A549 (cell line): ENCODE measurements at regions of chr6 and their contacts with region 1.

Region 1: GRCh38 chr6:35240840-35241801 is 18.4 kb upstream of the ZNF76 start:
- DNase-seq: peak; percentile 48 to 80
- ATAC-seq: peak; percentile 91 to 92
- H3K4me3 ChIP-seq: no peak overlapping the region
- H3K27ac ChIP-seq: no peak overlapping the region
- H3K4me1 ChIP-seq: no peaks in the 10 kb centered on the region
- CTCF ChIP-seq: peak; percentile 80
- EP300 ChIP-seq: no peak
- POLR2A ChIP-seq: no peak
- RAD21 ChIP-seq: peak; percentile 83 to 84

Region 2: DNA sequence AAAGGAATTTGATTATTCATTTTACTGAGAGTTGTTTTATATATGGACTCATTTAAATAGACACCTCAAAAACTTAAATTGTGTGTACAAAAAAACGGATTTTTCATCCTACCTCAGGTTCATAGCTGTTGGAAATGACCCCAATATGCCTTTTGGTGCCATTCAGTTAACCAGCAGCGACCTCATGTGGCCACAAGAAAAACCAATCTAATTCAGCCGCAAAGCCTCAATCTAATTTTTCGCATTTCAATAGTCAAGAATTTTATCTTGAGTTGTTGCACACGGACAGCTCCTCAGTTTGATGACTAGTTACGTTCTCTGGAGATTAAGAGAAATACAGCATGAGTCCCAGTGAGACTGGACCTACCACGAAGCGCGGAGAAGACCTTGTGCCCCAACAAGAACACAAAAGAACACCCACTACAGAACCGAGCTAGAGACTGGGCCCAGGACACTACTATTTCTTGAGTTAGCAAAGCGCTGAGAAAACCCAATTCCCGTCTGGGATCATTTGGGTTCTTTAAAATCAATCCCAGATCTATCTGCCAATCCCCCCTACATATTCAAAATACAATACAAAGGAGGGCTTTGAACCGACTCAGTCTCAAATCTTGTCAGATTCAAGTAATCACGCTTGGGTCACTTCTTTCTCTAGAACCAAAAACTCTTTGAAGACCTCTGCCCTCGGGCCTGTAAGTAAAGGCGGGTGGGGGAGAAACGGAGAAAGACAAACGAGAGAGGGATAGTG is 101.0 kb before region 1 on chr6:
- CTCF ChIA-PET with region 1: interaction called, 107 read pairs
- POLR2A ChIA-PET with region 1: no interaction called
- DNase-seq: peak; percentile 18 to 67
- ATAC-seq: peak; percentile 24 to 60; a peak in 2 of 6 replicates
- H3K4me3 ChIP-seq: no peak overlapping the region
- H3K27ac ChIP-seq: no peak overlapping the region
- H3K4me1 ChIP-seq: peaks cover 4% of the 10 kb centered on the region; the same call in 2 of the 3 replicates
- CTCF ChIP-seq: peak; percentile 83
- EP300 ChIP-seq: no peak
- POLR2A ChIP-seq: no peak
- RAD21 ChIP-seq: peak; percentile 93

Region 3: DNA sequence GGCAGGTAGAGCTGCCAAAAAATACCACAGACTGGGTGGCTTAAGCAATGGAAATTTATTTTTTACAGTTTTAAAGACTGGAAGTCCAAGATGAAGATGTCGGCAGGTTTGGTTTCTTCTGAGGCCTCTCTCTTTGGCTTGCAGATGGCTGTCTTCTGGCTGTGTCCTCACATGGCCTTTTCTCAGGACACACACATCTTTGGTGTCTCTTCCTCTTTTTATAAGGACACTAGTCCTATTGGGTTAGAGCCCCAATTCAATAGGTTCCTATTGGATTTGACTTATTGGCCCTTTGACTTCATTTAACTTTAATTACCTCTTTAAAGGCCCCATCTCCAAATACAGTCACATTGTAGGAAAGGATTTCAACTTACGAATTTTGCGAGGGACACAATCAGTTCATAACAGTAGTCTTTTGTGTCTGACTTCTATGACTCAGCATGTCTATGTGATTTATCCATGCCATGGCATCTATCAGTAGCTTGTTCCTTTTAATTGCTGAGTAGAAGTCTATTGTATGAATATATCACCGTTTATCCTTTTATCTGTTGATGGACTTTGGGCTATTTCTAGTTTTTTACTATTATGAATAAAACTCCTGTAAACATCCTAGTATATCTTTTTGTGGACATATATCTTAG is 88.9 kb before region 1 on chr6:
- CTCF ChIA-PET with region 1: interaction called, 107 read pairs
- POLR2A ChIA-PET with region 1: no interaction called
- DNase-seq: peak in 1 of 2 experiments; percentile 13
- ATAC-seq: no peak
- H3K4me3 ChIP-seq: no peak overlapping the region
- H3K27ac ChIP-seq: no peak overlapping the region
- H3K4me1 ChIP-seq: peaks cover 15% of the 10 kb centered on the region; the same call in 2 of the 3 replicates
- CTCF ChIP-seq: no peak
- EP300 ChIP-seq: no peak
- POLR2A ChIP-seq: no peak
- RAD21 ChIP-seq: no peak

Region 4: DNA sequence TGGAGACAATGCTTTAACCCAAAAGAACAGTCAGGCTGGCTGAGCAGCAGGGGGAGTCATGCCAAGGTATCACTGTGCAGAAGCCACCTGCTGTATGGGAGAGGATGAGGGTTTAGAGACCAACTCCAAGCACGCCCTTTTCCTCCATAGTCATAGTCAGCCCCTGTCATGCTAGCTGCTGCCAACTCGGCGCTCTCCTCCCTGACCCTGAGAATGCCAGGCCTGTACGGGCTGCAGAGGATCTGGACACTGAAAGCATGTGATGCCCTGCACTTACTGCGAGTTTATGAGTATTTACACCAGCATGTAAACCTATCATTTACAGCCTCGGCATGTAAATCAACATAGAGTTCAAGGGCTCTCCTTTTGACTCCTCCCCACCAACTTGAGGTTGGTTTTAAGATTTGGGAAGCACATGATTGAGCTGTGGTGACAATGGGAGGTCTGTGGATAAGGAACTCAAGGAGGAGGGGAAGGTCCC is 39.0 kb before region 1 on chr6:
- CTCF ChIA-PET with region 1: interaction called, 61 read pairs
- POLR2A ChIA-PET with region 1: no interaction called
- DNase-seq: no peak
- ATAC-seq: peak in 1 of 2 experiments; percentile 33; a peak in 3 of 6 replicates
- H3K4me3 ChIP-seq: no peak overlapping the region
- H3K27ac ChIP-seq: no peak overlapping the region
- H3K4me1 ChIP-seq: no peaks in the 10 kb centered on the region; the same call in 2 of the 3 replicates
- CTCF ChIP-seq: no peak
- EP300 ChIP-seq: no peak
- POLR2A ChIP-seq: no peak
- RAD21 ChIP-seq: no peak

Region 5: GRCh38 chr6:35224720-35225119 is 16.4 kb before region 1 on chr6:
- CTCF ChIA-PET with region 1: interaction called, 60 read pairs
- POLR2A ChIA-PET with region 1: no interaction called
- DNase-seq: no peak
- ATAC-seq: no peak
- H3K4me3 ChIP-seq: no peak overlapping the region
- H3K27ac ChIP-seq: no peak overlapping the region
- H3K4me1 ChIP-seq: no peaks in the 10 kb centered on the region
- CTCF ChIP-seq: no peak
- EP300 ChIP-seq: no peak
- POLR2A ChIP-seq: no peak
- RAD21 ChIP-seq: no peak

Region 6: DNA sequence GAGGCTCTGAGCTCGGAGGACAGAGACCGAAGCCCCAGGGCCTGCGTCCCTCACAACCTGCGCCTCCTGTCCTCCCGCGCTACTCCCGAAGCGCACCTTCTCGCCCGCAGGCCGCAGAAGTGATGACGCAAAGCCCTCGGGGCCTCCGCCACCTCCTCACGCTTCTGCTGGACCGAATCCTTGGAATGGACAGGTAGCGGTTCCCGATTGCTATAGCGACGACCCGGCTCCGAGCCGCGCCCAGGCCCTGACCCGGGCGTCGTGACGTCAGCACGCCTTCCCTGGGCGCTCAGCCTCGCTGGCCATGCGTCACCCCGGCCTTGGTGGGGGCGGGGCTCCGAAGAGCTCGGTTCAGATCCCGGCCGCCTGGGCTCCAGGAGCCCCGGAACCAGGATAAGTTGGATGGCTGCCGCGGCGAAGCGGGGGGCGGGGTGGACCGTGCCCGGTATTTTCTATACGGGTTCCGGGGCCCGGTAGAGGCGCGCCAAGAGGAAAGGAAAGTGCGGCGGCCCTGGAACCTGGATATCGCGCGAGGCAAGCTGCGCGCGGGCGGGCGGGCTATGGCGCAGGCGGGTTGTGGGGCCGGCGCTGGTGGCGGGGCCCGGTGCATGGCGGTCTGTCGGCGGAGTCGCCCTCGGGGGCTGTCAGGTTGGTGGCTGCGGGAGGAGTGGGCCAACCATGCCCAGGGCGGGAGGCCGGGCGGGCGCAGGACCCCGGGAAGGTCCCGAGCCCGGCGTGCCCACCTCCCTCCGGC is 18.2 kb after region 1 on chr6 and contains the start of gene ZNF76:
- CTCF ChIA-PET with region 1: interaction called, 16 read pairs
- POLR2A ChIA-PET with region 1: no interaction called
- DNase-seq: peak; percentile 87 to 96
- ATAC-seq: peak; percentile 92 to 94
- H3K4me3 ChIP-seq: peak within 1 kb of the TSS; percentile 62
- H3K27ac ChIP-seq: peak within 1 kb of the TSS; percentile 93 to 100
- H3K4me1 ChIP-seq: peaks cover 21% of the 10 kb centered on the region
- CTCF ChIP-seq: no peak
- EP300 ChIP-seq: peak in 1 of 2 experiments; percentile 31; a peak in 1 of 5 replicates
- POLR2A ChIP-seq: peak; percentile 62
- RAD21 ChIP-seq: no peak
- polyA plus RNA-seq, gene ZNF76: 7.9 and 12.0 TPM in 2 replicates